Mammary epithelial cell (primary cell): ENCODE measurements at regions of chr1 and their contacts with region 1.

Region 1: GRCh38 chr1:89987170-89987819 is 7.6 kb upstream of the ZNF326 start:
- DNase-seq: peak; percentile 66
- H3K4me3 ChIP-seq: no peak overlapping the region
- H3K27ac ChIP-seq: no peak overlapping the region
- H3K4me1 ChIP-seq: peaks cover 20% of the 10 kb centered on the region
- H3K27me3 ChIP-seq: no peaks in the 10 kb centered on the region
- CTCF ChIP-seq: peak; percentile 81 to 82

Region 2: DNA sequence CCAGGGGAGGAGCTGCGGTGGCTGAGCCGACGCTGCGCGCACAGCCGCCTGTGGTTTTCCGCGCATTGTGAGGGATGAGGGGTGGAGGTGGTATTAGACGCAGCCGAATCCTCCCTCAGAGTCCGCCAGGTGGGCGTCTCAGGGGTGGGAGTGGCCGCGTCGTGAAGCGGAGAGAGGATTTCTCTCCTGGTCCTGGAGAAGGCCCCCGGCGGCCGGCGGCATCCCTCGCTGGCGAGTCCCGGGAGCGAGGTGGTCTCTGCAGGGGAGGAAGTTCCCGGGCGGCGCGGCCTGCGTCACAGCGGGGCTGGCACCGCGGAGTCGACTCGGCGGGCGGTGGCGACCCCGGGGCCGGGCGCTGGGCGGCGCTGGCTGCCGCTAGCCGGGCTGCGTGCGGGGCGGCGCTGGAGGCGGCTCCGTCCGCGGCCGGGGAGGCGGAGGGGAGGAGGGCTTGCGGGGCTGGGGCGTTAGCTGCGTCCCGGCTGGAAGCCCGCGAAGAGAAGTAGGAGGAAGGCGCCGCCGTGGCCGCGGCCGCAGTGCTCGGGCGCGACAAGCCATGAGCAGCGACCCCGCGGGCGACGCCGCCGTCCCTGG is 354.5 kb before region 1 on chr1 and contains the start of gene LRRC8C:
- CTCF ChIA-PET with region 1: no interaction called
- dilution Hi-C with region 1: no loop called
- in situ Hi-C with region 1: loop called (anchors 25 kb)
- intact Hi-C with region 1: loop called (anchors 1 kb)
- DNase-seq: peak; percentile 65
- H3K4me3 ChIP-seq: peak within 1 kb of the TSS; percentile 80 to 96 (median 92)
- H3K27ac ChIP-seq: peak within 1 kb of the TSS; percentile 60
- H3K4me1 ChIP-seq: peaks cover 28% of the 10 kb centered on the region
- H3K27me3 ChIP-seq: no peaks in the 10 kb centered on the region
- CTCF ChIP-seq: peak in 1 of 2 donors; percentile 37
- total RNA-seq, gene LRRC8C: 6.5 to 17.2 TPM

Region 3: DNA sequence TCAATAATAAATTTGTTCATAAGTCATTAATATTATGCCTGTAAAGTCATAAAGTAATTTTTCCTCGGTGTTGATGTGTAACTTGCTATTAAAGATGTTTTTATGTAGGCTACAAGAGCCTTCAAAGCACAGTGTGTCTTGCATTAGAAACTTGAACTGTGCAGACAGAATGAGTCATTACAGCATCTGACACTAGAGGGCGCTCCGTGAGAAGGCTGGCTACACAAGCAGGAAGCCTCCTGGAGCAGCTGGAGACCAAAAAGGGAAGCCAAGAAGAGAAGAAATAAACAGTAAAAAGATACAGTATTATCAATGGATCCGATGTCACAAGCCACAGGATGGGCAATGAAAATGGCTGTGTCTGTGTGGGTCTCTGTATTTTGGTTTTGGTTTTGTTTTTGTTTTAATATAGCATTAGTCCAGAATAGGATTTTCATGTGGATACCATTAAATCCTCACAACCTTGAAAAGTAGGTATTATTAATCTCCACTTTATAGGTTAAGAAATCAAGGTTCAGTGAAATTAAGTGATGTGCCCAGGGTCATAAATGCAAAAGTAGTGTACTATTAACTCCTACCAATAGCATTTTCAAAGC is 182.6 kb before region 1 on chr1:
- CTCF ChIA-PET with region 1: no interaction called
- dilution Hi-C with region 1: no loop called
- in situ Hi-C with region 1: loop called (anchors 5 kb)
- intact Hi-C with region 1: loop called (anchors 1 kb)
- DNase-seq: peak; percentile 64
- H3K4me3 ChIP-seq: no peak overlapping the region
- H3K27ac ChIP-seq: no peak overlapping the region
- H3K4me1 ChIP-seq: peaks cover 19% of the 10 kb centered on the region
- H3K27me3 ChIP-seq: no peaks in the 10 kb centered on the region
- CTCF ChIP-seq: peak; percentile 93 to 95

Region 4: GRCh38 chr1:89843281-89844121 is 143.8 kb before region 1 on chr1:
- CTCF ChIA-PET with region 1: no interaction called
- dilution Hi-C with region 1: no loop called
- in situ Hi-C with region 1: no loop called
- intact Hi-C with region 1: loop called (anchors 1 kb)
- DNase-seq: peak; percentile 63
- H3K4me3 ChIP-seq: peak overlapping the region; percentile 48 to 88 (median 72)
- H3K27ac ChIP-seq: peak overlapping the region; percentile 54
- H3K4me1 ChIP-seq: peaks cover 16% of the 10 kb centered on the region
- H3K27me3 ChIP-seq: no peaks in the 10 kb centered on the region
- CTCF ChIP-seq: peak; percentile 32 to 53

Region 5: GRCh38 chr1:89953072-89953626 is 34.1 kb before region 1 on chr1:
- CTCF ChIA-PET with region 1: no interaction called
- dilution Hi-C with region 1: no loop called
- in situ Hi-C with region 1: no loop called
- intact Hi-C with region 1: loop called (anchors 1 kb)
- DNase-seq: peak; percentile 95
- H3K4me3 ChIP-seq: no peak overlapping the region
- H3K27ac ChIP-seq: peak overlapping the region; percentile 85
- H3K4me1 ChIP-seq: peaks cover 25% of the 10 kb centered on the region
- H3K27me3 ChIP-seq: no peaks in the 10 kb centered on the region
- CTCF ChIP-seq: no peak